ENCODE measurements at regions of chrX and their contacts with region 1.

Region 1: GRCh38 chrX:135484641-135485289 is 35.7 kb upstream of the INTS6L start:
- DNase-seq: no peak
- H3K4me3 ChIP-seq: no peak overlapping the region
- H3K27ac ChIP-seq: no peak overlapping the region
- H3K4me1 ChIP-seq: no peaks in the 10 kb centered on the region
- H3K27me3 ChIP-seq: no peaks in the 10 kb centered on the region
- CTCF ChIP-seq: peak; percentile 49 to 51

Region 2: DNA sequence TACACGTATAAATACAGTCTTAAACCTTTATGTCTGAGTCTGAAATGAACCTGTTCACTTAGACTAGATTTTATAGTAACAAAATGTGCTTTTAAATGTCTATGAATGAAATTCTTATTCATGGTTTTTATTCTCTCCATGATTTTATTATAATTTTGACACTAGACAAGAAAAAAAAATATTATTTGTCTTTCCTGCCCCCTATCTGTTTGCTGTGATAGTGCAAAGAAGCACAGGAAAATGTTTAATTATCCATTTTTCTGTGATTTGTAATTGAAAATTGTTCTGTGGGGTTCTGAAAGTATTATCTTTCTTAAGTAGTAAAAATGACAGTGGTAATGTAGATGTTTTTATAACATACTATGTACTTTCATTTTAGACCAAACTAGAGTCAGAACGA is 87.7 kb after region 1 on chrX:
- intact Hi-C with region 1: loop called (anchors 10 kb)
- DNase-seq: no peak
- H3K4me3 ChIP-seq: no peak overlapping the region
- H3K27ac ChIP-seq: no peak overlapping the region
- H3K4me1 ChIP-seq: no peaks in the 10 kb centered on the region
- H3K27me3 ChIP-seq: no peaks in the 10 kb centered on the region
- CTCF ChIP-seq: peak; percentile 15 to 23